ENCODE measurements at regions of chr18 and their contacts with region 1.

Region 1: DNA sequence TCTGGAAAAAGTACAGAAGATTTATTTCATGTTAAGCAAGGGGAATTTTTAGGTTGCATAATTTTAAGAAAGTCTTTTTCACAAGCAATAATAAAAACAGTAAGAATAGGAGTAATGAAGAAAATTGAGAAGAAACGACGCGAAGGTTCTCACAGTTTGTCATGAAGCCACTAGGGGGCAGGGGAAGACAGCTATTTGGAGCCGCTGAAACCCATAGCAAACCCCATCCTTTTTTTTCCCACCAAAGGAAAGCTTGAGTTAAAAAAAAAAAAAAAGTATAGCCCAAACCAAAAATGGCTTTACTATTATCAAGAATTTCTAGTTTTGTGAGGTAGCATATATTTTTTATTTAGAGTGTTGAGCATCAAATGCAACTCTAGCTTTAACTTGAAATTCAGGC is 300.9 kb downstream of the PHLPP1 start:
- DNase-seq: peak; percentile 66
- ATAC-seq: peak; percentile 57
- H3K4me3 Mint-ChIP-seq: no peak overlapping the region
- H3K27ac Mint-ChIP-seq: no peak overlapping the region
- H3K4me1 Mint-ChIP-seq: no peaks in the 10 kb centered on the region
- H3K27me3 Mint-ChIP-seq: peaks cover 38% of the 10 kb centered on the region

Region 2: GRCh38 chr18:62486304-62486964 is 529.8 kb before region 1 on chr18:
- CTCF ChIA-PET with region 1: no interaction called
- POLR2A ChIA-PET with region 1: no interaction called
- DNase-seq: no peak
- ATAC-seq: no peak
- H3K4me3 Mint-ChIP-seq: no peak overlapping the region
- H3K27ac Mint-ChIP-seq: no peak overlapping the region
- H3K4me1 Mint-ChIP-seq: no peaks in the 10 kb centered on the region
- H3K27me3 Mint-ChIP-seq: peaks cover 18% of the 10 kb centered on the region

Region 3: GRCh38 chr18:62944454-62944853 is 71.8 kb before region 1 on chr18:
- CTCF ChIA-PET with region 1: no interaction called
- POLR2A ChIA-PET with region 1: no interaction called
- DNase-seq: no peak
- ATAC-seq: no peak
- H3K4me3 Mint-ChIP-seq: no peak overlapping the region
- H3K27ac Mint-ChIP-seq: no peak overlapping the region
- H3K4me1 Mint-ChIP-seq: peaks cover 6% of the 10 kb centered on the region
- H3K27me3 Mint-ChIP-seq: no peaks in the 10 kb centered on the region

Region 4: DNA sequence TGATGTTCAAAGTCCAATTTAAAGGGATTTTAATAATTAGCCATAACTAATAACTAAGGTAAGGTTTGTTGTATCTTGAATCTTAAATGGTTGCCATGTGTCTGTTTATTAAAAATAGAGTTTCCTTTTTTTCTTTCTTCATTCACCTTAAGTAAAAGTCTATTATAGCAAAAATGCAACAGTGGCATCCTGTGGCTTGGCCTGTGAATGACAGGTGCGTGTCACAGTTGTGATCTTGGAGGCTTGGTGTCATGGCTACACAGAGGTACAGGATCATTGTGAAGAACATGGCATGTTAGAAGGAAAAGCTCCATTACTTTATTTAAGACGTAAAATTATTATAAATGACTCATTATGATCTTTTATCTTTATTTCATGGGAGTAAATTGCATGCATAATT is 57.2 kb after region 1 on chr18:
- CTCF ChIA-PET with region 1: interaction called, 14 read pairs
- POLR2A ChIA-PET with region 1: no interaction called
- DNase-seq: peak; percentile 49
- ATAC-seq: no peak
- H3K4me3 Mint-ChIP-seq: no peak overlapping the region
- H3K27ac Mint-ChIP-seq: no peak overlapping the region
- H3K4me1 Mint-ChIP-seq: peaks cover 11% of the 10 kb centered on the region
- H3K27me3 Mint-ChIP-seq: peaks cover 31% of the 10 kb centered on the region

Region 5: DNA sequence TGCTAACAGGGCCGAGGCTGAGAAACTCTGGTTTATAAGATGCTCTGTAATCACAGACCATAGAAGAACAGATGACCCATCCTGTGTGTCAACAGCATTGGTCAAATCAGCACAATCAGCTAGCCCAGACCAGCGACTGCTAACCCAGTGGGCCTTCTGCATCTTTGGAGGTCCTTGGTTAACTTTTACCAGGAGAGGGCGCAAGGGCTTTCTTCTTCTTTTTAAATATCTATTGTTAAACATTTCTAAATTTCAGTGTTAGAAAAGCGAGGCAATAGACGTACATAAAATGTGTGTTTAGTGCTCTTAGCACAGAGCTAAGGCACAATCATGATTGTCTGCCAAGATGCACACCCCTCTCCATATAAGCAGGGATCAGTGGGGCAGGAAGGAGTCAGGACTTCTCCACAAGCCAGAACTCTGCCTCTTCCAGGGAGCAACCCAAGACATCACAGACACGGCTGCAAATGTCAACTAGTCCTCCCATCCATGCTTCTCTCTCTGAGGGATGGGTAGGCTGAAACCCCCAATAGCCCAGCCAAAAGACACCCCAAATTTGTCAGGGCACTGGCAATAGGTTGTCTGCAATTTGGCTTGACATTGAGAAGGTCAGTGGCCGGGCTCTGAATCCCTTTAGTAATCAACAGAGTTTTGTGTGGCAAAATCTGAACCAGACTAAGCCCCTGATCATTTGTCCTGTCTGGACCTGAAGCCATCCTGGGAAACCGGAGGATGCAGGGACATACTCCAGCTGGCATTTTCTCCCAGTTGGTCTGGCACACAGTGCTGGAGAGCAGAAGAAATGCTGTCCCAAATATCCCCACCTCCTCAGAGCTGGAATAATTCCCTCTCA is 115.1 kb after region 1 on chr18:
- CTCF ChIA-PET with region 1: interaction called, 19 read pairs
- POLR2A ChIA-PET with region 1: no interaction called
- DNase-seq: peak; percentile 73
- ATAC-seq: peak; percentile 56
- H3K4me3 Mint-ChIP-seq: no peak overlapping the region
- H3K27ac Mint-ChIP-seq: peak overlapping the region; percentile 70
- H3K4me1 Mint-ChIP-seq: peaks cover 52% of the 10 kb centered on the region
- H3K27me3 Mint-ChIP-seq: no peaks in the 10 kb centered on the region

Region 6: DNA sequence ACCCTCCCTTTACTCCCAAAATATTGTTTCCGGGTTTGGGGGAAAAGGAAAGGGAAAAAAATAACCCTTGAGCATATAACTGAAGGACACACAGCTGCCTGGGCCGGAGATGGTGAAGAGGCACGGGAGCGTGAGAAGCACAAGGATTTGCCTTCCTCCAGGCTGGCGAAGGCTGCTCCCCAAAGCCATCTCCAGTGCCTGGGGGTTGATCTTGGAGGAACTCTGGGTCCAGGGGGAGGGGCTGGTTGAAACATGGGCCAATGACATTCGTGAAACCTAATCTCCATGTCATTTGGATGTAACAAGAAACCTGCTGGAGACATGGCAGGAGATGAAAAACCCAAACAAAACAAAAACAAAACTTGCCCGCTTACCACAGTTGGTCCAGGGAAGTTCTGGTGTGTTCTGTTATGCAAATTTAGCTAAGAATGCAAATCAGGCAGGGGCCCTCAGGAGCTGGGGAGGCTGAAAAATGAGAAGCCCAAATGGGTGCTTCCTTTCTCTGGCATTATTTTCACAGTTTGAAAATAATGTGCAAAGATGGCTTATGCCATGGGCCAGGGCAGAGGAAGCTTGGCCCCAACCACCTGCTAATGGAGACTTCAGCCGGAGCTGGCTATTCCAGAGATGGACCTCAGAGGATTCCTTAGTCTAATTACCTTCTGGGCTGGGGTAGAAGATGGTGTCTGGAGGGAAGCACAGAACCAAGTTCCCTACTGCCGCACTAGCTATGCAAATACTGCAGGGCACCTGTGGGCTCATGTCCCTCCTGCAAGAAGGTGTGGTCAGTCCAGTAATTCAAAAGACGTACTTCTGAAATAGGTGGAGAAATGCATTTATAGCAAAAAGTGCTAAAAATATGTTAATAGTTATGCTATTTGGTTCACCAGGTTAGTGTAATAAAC is 122.4 kb after region 1 on chr18:
- CTCF ChIA-PET with region 1: interaction called, 13 read pairs
- POLR2A ChIA-PET with region 1: no interaction called
- DNase-seq: no peak
- ATAC-seq: peak; percentile 54
- H3K4me3 Mint-ChIP-seq: peak overlapping the region; percentile 77
- H3K27ac Mint-ChIP-seq: peak overlapping the region; percentile 95
- H3K4me1 Mint-ChIP-seq: peaks cover 75% of the 10 kb centered on the region
- H3K27me3 Mint-ChIP-seq: no peaks in the 10 kb centered on the region

Region 7: GRCh38 chr18:63339920-63340484 is 323.7 kb after region 1 on chr18:
- CTCF ChIA-PET with region 1: interaction called, 30 read pairs
- POLR2A ChIA-PET with region 1: no interaction called
- DNase-seq: peak; percentile 71
- ATAC-seq: peak; percentile 64
- H3K4me3 Mint-ChIP-seq: no peak overlapping the region
- H3K27ac Mint-ChIP-seq: no peak overlapping the region
- H3K4me1 Mint-ChIP-seq: peaks cover 3% of the 10 kb centered on the region
- H3K27me3 Mint-ChIP-seq: no peaks in the 10 kb centered on the region